AG04450 (cell line): ENCODE measurements at regions of chr11 and their contacts with region 1.

Region 1: GRCh38 chr11:131688051-131688698 is 317.8 kb downstream of the NTM start:
- DNase-seq: no peak
- H3K4me3 ChIP-seq: peak overlapping the region; percentile 46
- H3K27ac ChIP-seq: no peak overlapping the region
- H3K27me3 ChIP-seq: peaks cover 11% of the 10 kb centered on the region
- CTCF ChIP-seq: peak; percentile 89

Region 2: GRCh38 chr11:131661132-131661531 is 27.0 kb before region 1 on chr11:
- CTCF ChIA-PET with region 1: no interaction called
- POLR2A ChIA-PET with region 1: no interaction called
- DNase-seq: no peak
- H3K4me3 ChIP-seq: no peak overlapping the region
- H3K27ac ChIP-seq: no peak overlapping the region
- H3K27me3 ChIP-seq: peaks cover 2% of the 10 kb centered on the region
- CTCF ChIP-seq: no peak

Region 3: DNA sequence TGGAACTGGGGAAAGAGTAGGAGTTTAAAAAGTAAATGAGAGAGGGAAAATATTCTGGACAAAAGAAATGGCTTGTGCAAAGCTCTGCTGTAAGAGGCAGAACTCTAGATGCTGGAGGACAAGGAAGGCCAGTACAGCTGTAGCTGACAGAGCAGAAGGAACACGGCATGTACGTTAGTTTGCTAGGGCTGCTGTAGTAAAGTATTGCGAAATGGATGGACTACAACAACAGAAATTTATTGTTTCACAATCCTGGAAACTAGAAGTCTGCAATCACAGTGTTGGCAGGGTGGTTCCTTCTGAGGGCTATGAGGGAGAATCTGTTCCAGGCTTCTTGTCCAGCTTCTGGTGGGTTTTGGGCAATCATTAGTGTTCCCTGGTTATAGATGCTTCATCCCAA is 136.6 kb after region 1 on chr11:
- CTCF ChIA-PET with region 1: no interaction called
- POLR2A ChIA-PET with region 1: no interaction called
- DNase-seq: no peak
- H3K4me3 ChIP-seq: no peak overlapping the region
- H3K27ac ChIP-seq: no peak overlapping the region
- H3K27me3 ChIP-seq: peaks cover 9% of the 10 kb centered on the region
- CTCF ChIP-seq: no peak

Region 4: GRCh38 chr11:133064152-133064877 is 1376.1 kb after region 1 on chr11:
- CTCF ChIA-PET with region 1: interaction called, 11 read pairs
- POLR2A ChIA-PET with region 1: no interaction called
- DNase-seq: peak; percentile 44
- H3K4me3 ChIP-seq: peak overlapping the region; percentile 67
- H3K27ac ChIP-seq: peak overlapping the region; percentile 31
- H3K27me3 ChIP-seq: peaks cover 3% of the 10 kb centered on the region
- CTCF ChIP-seq: peak; percentile 79